Caco-2 (cell line): ENCODE measurements at regions of chr20 and their contacts with region 1.

Region 1: DNA sequence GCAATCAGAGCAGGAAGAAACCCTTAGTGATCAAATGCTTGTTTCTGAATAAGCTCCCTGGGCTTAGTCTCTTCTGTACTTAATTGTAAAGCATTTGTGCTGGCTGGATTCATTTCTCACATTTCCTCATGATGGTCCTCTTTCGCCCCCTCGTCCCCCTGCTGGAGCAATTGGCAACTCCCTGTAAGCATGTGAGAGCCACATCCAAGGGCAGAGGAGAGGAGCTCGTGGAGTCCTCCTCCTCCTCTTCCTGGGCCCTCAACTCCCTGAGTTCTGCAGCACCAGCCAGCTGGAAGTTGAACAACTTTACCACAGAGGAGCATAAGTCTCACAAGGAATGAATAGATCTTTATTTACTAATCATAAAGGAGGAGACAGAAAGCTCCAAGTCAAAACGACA is 12.6 kb downstream of the ANKEF1 start:
- DNase-seq: peak in 1 of 2 experiments; percentile 46
- H3K4me3 ChIP-seq: no peak overlapping the region
- H3K4me3 Mint-ChIP-seq: no peak overlapping the region
- H3K27ac Mint-ChIP-seq: no peak overlapping the region
- H3K4me1 ChIP-seq: no peaks in the 10 kb centered on the region
- H3K4me1 Mint-ChIP-seq: no peaks in the 10 kb centered on the region
- H3K27me3 ChIP-seq: no peaks in the 10 kb centered on the region
- H3K27me3 Mint-ChIP-seq: no peaks in the 10 kb centered on the region
- CTCF ChIP-seq: peak; percentile 44 to 60

Region 2: DNA sequence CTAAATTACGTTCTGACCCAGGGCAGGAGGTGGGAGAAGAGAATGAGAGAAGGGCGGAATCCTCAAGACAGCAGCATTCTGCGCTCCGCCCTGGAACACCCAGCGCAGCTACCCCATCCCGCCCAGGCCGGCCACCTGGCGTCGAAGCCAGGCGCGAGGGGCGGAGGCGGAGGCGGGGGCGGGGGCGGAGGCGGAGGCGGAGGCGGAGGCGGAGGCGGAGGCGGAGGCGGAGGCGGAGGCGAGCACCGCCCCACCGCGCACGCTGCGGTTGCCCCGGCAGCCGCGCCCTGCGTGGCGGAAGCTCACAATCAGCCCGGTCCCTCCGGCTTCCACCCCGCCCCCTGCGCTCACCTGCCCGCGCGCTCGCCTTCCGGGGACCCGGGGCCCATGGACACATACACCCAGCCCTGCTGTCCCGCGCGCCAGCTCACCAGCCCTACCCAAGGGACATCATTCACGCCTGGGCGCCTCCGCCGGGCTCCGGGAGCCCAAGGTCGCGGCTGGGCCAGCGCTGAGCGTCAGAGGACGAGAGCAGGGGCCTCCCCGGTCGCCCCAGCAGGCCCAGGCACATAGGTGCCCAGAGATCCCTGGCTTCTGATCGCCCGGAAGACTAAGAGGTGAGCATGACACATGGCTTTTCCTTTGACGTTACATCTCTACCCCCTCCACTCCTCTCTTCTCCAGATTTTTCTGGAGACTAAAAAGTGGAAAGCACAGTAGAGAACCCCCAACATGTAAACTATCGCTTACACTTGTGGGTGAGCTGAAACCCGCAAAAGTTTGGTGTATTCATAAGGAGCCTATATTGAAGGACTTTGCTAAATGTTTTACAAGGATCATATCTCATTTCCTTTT is 12.5 kb before region 1 on chr20 and contains the start of gene ANKEF1:
- CTCF ChIA-PET with region 1: interaction called, 11 read pairs
- POLR2A ChIA-PET with region 1: no interaction called
- intact Hi-C with region 1: no loop called
- DNase-seq: peak; percentile 90 to 94
- H3K4me3 ChIP-seq: peak within 1 kb of the TSS; percentile 72
- H3K4me3 Mint-ChIP-seq: peak within 1 kb of the TSS; percentile 71
- H3K27ac Mint-ChIP-seq: no peak within 1 kb of the TSS
- H3K4me1 ChIP-seq: peaks cover 12% of the 10 kb centered on the region
- H3K4me1 Mint-ChIP-seq: no peaks in the 10 kb centered on the region
- H3K27me3 ChIP-seq: no peaks in the 10 kb centered on the region
- H3K27me3 Mint-ChIP-seq: peaks cover 2% of the 10 kb centered on the region
- CTCF ChIP-seq: no peak
- total RNA-seq, gene ANKEF1: 3.7 and 3.9 TPM in 2 replicates